ENCODE measurements at regions of chr7 and their contacts with region 1.

Region 1: DNA sequence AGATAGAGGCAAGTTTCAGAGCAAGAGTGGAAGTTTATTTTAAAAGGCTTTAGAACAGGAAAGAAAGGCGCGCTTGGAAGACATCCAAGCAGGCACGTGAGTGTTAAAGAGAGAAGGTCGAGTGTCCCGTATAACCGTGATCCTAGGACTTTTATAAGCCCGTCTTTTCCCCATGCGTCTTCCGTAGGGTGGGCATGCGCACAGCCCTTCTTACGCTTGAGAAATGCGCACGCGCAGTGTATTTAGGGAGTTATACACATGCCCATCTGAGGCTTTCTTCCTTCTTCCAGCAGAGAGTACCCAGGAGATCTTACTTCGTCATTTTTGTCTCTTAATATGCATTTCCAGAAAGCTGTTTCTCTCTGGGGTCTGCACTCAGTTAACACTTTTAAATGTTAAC is 52.4 kb downstream of the CALD1 start:
- DNase-seq: peak in 4 of 5 donors; percentile 27 to 68 (median 46)
- ATAC-seq: peak in 2 of 4 donors; percentile 10 to 12
- H3K4me3 ChIP-seq: peak overlapping the region in 6 of 12 donors; percentile 7 to 35 (median 21)
- H3K27ac ChIP-seq: peak overlapping the region in 10 of 12 donors; percentile 28 to 87 (median 58)
- H3K4me1 ChIP-seq: peaks cover 0 to 94% (median 55%) of the 10 kb centered on the region in 12 donors
- H3K27me3 ChIP-seq: no peaks in the 10 kb centered on the region
- CTCF ChIP-seq: no peak
- POLR2A ChIP-seq: no peak

Region 2: DNA sequence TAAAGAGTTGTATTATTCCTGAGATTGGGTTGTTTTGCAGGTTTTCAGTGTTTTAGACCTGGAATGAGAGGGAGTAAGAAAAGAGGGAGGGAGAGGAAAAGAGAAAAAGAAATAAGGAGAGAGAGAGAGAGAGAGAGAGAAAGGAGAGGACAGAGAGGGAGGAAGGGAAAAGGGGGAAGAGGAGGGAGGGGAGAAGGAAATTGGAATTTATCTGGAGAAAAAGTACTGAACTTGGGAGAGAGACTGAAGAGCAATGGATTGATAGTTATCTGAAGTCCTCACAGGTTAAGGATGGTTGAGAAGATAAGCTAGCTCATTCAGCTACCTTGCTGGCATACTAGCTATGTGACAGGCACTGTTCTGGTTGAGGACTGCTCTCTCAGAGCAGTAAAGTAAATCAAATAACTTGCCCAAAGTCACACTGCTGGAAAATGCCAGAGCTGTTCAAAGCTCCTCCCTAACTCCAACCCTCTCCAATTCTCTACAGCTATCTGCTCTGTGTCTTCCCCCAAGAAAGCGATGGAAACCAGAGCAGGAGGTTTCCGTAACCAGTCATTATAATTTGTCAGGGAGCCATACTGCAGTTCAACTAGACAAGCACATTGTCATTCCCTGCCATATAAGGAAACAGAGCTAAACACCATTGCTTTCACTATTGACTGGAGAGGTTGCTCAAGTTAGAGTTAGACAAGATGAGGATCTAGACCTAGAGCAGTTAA is 41.7 kb before region 1 on chr7:
- intact Hi-C with region 1: loop called in 4 of 10 experiments (anchors 5 to 10 kb)
- DNase-seq: peak in 2 of 5 donors; percentile 44 to 50
- ATAC-seq: peak; percentile 69 to 91 (median 88)
- H3K4me3 ChIP-seq: peak overlapping the region in 4 of 12 donors; percentile 12 to 29 (median 24)
- H3K27ac ChIP-seq: peak overlapping the region; percentile 24 to 92 (median 84)
- H3K4me1 ChIP-seq: peaks cover 0 to 90% (median 56%) of the 10 kb centered on the region in 12 donors
- H3K27me3 ChIP-seq: no peaks in the 10 kb centered on the region
- CTCF ChIP-seq: no peak
- POLR2A ChIP-seq: peak in 1 of 2 donors; percentile 28

Region 3: DNA sequence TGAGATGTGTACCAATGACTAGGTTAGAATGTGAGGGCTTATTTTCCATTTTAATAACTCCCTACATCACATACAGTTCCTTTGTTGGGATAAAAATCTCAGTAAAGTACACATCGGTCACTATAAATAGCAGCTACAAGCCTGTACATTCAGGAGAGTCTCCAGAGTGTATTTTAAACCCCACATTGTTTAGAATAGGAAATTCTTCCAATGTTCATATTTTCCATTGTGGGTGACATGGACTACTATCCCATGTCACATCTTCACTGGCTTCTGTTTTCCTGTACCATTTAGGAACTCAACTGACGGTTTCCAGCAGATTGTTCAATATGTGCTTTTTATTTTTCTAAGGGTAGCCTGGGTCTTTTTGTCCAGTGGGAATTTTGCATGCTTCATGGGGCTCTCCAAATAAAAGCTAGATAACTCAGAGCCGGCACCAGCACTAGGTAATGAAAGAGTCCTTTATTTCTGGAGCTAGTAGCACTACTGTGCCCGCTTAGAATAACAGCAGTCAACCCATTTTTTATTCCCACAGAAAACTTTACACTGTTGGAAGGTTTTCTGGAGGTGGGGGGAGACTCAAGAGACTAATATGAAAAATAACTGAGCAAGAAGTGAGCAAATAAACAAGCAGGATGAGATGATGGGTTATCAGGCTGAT is 48.1 kb after region 1 on chr7:
- intact Hi-C with region 1: loop called in 2 of 10 experiments (anchors 5 to 10 kb)
- DNase-seq: no peak
- ATAC-seq: peak in 2 of 4 donors; percentile 24 to 44
- H3K4me3 ChIP-seq: no peak overlapping the region
- H3K27ac ChIP-seq: peak overlapping the region in 6 of 12 donors; percentile 2 to 59 (median 28)
- H3K4me1 ChIP-seq: peaks cover 0 to 61% (median 23%) of the 10 kb centered on the region in 12 donors
- H3K27me3 ChIP-seq: no peaks in the 10 kb centered on the region
- CTCF ChIP-seq: no peak
- POLR2A ChIP-seq: no peak

Region 4: GRCh38 chr7:134891262-134891695 is 59.4 kb after region 1 on chr7:
- intact Hi-C with region 1: loop called in 1 of 10 experiments (anchors 10 kb)
- DNase-seq: peak; percentile 88 to 92 (median 88)
- ATAC-seq: peak; percentile 88 to 93 (median 91)
- H3K4me3 ChIP-seq: peak overlapping the region; percentile 41 to 70 (median 60)
- H3K27ac ChIP-seq: peak overlapping the region; percentile 69 to 94 (median 84)
- H3K4me1 ChIP-seq: peaks cover 8 to 71% (median 46%) of the 10 kb centered on the region in 12 donors
- H3K27me3 ChIP-seq: no peaks in the 10 kb centered on the region
- CTCF ChIP-seq: no peak
- POLR2A ChIP-seq: peak in 1 of 2 donors; percentile 36

Region 5: DNA sequence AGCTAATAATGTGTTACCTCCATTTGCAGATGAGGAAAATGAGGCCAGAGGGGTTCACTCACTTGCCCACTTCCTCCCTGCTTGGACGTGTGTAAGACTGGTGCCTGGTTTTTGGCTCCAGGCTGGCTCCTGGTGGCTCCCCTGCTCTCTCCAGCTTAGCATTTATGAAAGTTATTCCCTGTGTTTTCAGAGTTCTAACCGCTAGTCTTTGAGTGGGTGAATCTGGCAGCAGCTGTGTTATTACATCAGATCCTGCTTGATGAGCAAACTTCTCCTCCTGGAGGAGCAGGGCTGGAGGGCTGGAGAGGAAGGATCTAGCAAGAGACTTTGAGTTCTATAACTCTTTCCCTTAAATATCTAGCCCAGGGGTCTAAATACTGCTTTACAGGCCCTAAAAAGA is 73.5 kb after region 1 on chr7:
- intact Hi-C with region 1: loop called in 1 of 10 experiments (anchors 10 kb)
- DNase-seq: peak in 4 of 5 donors; percentile 56 to 77 (median 68)
- ATAC-seq: peak; percentile 21 to 87 (median 76)
- H3K4me3 ChIP-seq: no peak overlapping the region
- H3K27ac ChIP-seq: peak overlapping the region in 11 of 12 donors; percentile 30 to 72 (median 45)
- H3K4me1 ChIP-seq: peaks cover 4 to 93% (median 57%) of the 10 kb centered on the region in 12 donors
- H3K27me3 ChIP-seq: no peaks in the 10 kb centered on the region
- CTCF ChIP-seq: peak in 5 of 12 donors; percentile 6 to 38 (median 24)
- POLR2A ChIP-seq: no peak